PC-3 (cell line): ENCODE measurements at regions of chr18 and their contacts with region 1.

Region 1: DNA sequence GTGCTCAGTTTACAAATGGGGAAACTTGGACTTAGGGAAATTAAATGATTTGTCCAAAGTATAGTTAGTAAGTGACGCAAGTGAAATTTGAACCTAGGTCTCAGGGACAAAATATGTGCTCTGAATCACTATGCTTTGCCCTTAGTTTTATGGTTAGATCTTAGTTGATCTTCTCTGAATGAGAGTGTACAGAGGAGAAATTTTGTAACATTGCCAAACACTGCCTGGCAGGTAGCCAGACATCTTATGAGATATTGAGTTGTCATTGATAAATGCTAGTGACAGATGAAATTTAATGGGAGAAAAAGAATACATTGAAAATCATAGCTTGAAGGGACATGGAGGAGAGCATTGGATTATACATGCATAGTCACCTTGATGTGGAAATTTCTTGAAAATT is 91.4 kb downstream of the GALNT1 start:
- DNase-seq: peak; percentile 90
- ATAC-seq: peak; percentile 92
- H3K4me3 ChIP-seq: no peak overlapping the region
- H3K27ac ChIP-seq: peak overlapping the region; percentile 72
- H3K4me1 ChIP-seq: peaks cover 20% of the 10 kb centered on the region
- H3K27me3 ChIP-seq: no peaks in the 10 kb centered on the region
- CTCF ChIP-seq: no peak

Region 2: GRCh38 chr18:35588995-35589394 is 83.9 kb before region 1 on chr18:
- CTCF ChIA-PET with region 1: no interaction called
- POLR2A ChIA-PET with region 1: interaction called, 17 read pairs
- intact Hi-C with region 1: no loop called
- DNase-seq: no peak
- ATAC-seq: no peak
- H3K4me3 ChIP-seq: no peak overlapping the region
- H3K27ac ChIP-seq: no peak overlapping the region
- H3K4me1 ChIP-seq: no peaks in the 10 kb centered on the region
- H3K27me3 ChIP-seq: no peaks in the 10 kb centered on the region
- CTCF ChIP-seq: no peak